AG04450 (cell line): ENCODE measurements at regions of chr14 and their contacts with region 1.

Region 1: DNA sequence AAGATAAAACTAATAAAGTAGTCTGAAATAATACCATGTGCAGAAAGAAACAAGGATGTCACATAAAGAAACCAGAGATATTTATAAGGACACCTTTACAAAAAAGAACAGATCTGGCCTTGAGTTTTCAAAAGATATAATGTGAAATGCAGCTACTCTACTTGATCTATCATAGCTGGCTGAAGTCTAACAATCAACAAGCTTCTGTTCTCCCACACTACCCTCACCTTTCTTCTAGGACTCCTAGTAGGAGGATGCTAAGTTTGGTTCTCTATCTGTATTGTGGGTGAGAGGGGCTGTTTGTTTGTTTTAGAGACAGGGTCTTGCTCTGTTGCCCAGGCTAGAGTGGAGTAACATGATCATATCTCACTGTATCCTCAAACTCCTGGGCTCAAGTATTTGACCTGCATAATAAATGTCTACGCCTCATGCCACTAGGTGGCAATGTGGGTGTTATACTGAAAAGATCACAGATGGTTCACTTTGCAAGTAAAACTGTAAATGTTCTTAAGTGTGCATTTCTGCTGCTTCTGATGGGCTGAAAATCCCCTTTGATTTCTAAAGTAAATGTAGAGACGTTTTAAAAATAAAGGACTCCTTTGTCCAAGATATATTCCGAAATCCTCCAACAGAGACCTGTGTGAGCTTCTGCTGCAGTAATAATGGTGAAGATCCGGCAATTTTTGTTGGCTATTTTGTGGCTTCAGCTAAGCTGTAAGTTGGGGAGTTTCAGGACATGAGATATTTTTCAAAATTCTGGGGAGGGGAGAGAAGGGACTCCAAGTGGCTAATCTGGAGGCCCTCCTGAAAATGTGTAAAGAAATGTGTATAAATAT is 269.3 kb downstream of the DAD1 start:
- DNase-seq: no peak
- H3K4me3 ChIP-seq: no peak overlapping the region
- H3K27ac ChIP-seq: no peak overlapping the region
- H3K27me3 ChIP-seq: peaks cover 13% of the 10 kb centered on the region
- CTCF ChIP-seq: peak; percentile 74

Region 2: DNA sequence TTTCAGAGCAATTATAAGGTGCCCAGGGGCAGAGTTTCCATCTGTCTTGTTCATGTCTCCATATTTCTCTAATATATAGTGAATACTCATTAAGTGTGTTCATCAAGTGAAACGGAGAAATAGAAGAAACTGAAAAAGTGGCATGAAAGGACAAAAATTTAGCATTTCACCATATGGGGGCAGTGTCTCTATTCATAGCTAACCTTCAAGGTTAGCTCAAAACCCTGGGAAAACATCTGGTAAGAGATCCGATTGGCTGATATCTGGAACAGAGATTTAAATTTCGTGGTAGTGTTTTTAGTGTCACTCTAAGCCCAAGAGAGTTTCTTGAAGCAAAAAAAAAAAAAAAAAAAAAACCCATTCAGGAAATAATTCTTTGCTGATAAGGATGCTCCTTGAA is 98.2 kb before region 1 on chr14:
- CTCF ChIA-PET with region 1: interaction called, 12 read pairs
- POLR2A ChIA-PET with region 1: no interaction called
- DNase-seq: no peak
- H3K4me3 ChIP-seq: no peak overlapping the region
- H3K27ac ChIP-seq: no peak overlapping the region
- H3K27me3 ChIP-seq: no peaks in the 10 kb centered on the region
- CTCF ChIP-seq: peak; percentile 59

Region 3: DNA sequence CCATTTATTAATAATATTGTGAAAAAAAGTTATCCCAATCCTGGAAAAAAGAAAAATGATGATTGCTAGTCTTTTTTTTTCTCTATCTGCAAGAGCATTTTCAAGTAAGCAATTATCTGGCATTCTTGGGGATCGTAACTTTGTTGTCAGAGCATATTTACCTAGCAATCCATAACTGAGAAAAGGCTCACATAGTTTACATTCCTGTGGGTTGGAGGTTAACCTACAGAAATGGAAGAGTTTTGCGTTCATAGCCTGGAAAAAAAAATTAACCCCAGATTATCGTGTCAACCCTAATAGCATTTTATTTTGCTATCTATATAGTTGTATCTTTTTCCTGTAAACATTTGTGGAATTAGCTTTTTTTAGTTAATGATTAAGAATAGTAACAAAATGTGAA is 23.0 kb before region 1 on chr14:
- CTCF ChIA-PET with region 1: interaction called, 13 read pairs
- POLR2A ChIA-PET with region 1: no interaction called
- DNase-seq: peak; percentile 65
- H3K4me3 ChIP-seq: no peak overlapping the region
- H3K27ac ChIP-seq: no peak overlapping the region
- H3K27me3 ChIP-seq: no peaks in the 10 kb centered on the region
- CTCF ChIP-seq: no peak

Region 4: GRCh38 chr14:22333422-22334276 is 13.9 kb after region 1 on chr14:
- CTCF ChIA-PET with region 1: interaction called, 17 read pairs
- POLR2A ChIA-PET with region 1: no interaction called
- DNase-seq: no peak
- H3K4me3 ChIP-seq: no peak overlapping the region
- H3K27ac ChIP-seq: no peak overlapping the region
- H3K27me3 ChIP-seq: peaks cover 5% of the 10 kb centered on the region
- CTCF ChIP-seq: no peak

Region 5: GRCh38 chr14:22380571-22381407 is 61.0 kb after region 1 on chr14:
- CTCF ChIA-PET with region 1: interaction called, 124 read pairs
- POLR2A ChIA-PET with region 1: no interaction called
- DNase-seq: no peak
- H3K4me3 ChIP-seq: no peak overlapping the region
- H3K27ac ChIP-seq: no peak overlapping the region
- H3K27me3 ChIP-seq: peaks cover 3% of the 10 kb centered on the region
- CTCF ChIP-seq: no peak